Activated CD8-positive, alpha-beta T cell treated with anti-CD3 and anti-CD28 coated beads for 36 hours (primary cell): ENCODE measurements at regions of chr7 and their contacts with region 1.

Region 1: DNA sequence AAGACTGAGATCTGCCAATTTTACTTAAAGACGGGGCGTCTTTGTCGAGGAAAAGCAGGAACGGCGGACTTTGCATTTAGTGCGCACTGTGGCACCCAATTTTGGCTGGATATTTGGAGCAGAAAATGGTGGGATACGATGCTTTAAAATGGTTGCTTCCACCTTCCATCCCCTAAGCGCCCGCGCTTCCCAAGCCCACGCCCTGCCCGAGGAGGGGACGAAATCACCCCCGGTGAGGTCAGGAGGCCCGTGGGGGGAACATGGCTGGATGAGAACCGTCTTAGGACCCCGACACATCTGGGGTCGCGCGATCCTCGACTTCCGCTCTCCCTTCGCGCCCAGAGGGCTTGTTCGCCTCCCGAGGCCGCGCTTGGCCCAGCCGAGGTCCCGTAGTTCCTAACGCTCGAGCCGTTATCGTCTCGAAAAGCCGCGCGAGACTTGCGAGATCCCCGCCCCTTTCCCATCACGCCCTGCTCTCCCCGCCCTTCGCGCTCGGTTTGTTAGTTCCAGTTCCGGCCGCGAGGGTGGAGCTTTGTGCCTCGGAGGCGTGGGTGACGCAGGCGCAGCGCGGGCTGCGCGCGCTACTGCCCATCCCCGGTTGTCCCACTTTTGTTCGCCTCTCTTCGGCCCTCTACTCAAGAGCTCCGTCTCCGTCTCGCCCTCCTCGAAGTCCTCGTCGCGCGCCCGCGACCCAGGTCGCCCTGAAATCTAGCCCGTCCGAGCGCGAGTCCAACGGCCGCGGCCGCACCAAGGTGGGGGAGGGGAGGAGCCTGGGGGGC is at the start of gene SRRT:
- DNase-seq: peak; percentile 99
- ATAC-seq: peak; percentile 95
- H3K4me3 Mint-ChIP-seq: peak within 1 kb of the TSS; percentile 98
- H3K27ac Mint-ChIP-seq: peak within 1 kb of the TSS; percentile 98
- H3K4me1 Mint-ChIP-seq: peaks cover 38% of the 10 kb centered on the region
- H3K27me3 Mint-ChIP-seq: no peaks in the 10 kb centered on the region
- CTCF ChIP-seq: no peak
- total RNA-seq, gene SRRT: 211 to 239 TPM

Region 2: DNA sequence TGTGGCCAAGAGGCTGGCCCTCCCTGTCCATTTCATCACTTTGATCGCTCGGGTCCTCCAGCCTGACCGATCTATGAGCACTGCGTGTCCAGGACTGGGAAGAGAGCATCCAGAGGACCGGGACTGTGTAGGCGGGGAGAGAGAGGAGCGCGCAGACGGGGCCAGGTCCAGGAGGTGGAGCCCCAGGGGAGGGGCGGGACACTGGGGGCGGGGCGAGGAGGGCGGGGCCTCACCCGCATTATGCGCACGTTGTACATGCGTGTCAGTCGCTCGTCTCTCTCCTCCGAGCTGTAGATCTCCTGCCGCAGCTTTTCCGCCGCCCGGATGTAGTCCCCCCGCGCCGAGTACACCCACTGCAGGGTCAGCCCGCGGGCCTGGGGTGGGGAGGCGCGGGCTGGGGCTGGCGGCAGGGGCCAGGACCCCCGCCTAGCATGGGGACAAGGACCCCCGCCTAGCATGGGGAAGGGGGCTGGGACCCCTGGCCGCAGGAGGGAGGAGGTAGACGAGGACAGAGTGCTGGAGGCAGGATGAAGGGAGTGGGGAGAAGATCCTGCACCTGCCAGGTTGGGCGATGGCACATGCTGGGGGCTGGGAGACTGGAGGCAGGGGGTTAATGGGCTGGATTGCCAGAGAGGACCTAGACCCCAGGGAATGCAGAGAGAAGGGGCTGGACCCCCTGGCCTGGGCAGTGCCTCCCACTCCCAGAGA is 248.1 kb before region 1 on chr7:
- CTCF ChIA-PET with region 1: no interaction called
- POLR2A ChIA-PET with region 1: no interaction called
- intact Hi-C with region 1: no loop called
- DNase-seq: peak; percentile 93
- ATAC-seq: peak; percentile 97
- H3K4me3 Mint-ChIP-seq: peak overlapping the region; percentile 72
- H3K27ac Mint-ChIP-seq: peak overlapping the region; percentile 81
- H3K4me1 Mint-ChIP-seq: peaks cover 23% of the 10 kb centered on the region
- H3K27me3 Mint-ChIP-seq: no peaks in the 10 kb centered on the region
- CTCF ChIP-seq: no peak

Region 3: GRCh38 chr7:100852048-100852872 is 22.5 kb before region 1 on chr7 and contains the start of gene SLC12A9:
- CTCF ChIA-PET with region 1: interaction called, 16 read pairs
- POLR2A ChIA-PET with region 1: interaction called, 12 read pairs
- intact Hi-C with region 1: no loop called
- DNase-seq: peak; percentile 92
- ATAC-seq: peak; percentile 98
- H3K4me3 Mint-ChIP-seq: peak within 1 kb of the TSS; percentile 90
- H3K27ac Mint-ChIP-seq: peak within 1 kb of the TSS; percentile 77
- H3K4me1 Mint-ChIP-seq: peaks cover 15% of the 10 kb centered on the region
- H3K27me3 Mint-ChIP-seq: no peaks in the 10 kb centered on the region
- CTCF ChIP-seq: peak; percentile 95
- total RNA-seq, gene SLC12A9: 10.2 to 11.3 TPM

Region 4: DNA sequence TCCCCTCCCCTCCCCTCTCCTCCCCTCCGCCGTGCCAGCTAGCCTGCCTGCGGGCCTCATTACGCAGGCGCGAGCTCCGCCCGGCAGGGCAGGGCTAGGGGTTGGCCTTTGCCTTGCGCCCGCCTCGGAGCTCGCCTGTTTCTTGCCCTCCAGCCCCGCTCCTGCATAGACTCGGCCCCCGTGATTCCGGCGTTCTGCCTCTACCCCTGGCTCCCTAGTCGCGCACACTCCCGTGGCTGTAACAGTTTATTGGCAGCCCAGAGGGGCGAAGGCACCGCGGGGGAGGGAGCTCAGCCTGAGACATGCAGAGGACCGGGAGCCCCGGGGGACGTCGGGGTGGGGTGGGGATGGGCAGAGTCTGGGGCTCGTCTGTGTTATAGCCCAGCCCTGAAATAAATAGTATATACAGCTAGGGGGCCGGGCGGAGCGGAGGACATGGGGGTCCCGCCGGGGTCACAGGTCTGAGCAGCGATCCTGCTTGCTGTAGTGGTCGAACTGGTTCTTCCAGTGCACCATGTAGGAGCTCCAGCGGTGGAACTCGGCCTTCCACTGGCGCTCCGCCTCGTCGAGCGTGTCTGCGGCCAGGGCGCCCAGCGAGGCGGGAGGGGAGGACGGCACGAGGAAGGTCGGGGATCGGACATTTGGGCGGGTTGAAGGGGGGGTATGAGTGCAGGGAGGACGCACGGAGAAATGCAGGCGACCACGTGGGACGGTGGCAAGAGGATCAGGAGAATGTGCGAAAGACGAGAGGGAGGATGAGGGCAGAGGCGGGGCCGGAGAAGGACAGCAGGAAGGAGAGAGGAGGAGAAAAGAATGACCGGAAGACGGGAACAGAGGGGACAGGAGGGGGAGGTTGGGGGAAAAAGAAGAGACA is 15.2 kb after region 1 on chr7:
- CTCF ChIA-PET with region 1: interaction called, 9 read pairs
- POLR2A ChIA-PET with region 1: interaction called, 167 read pairs
- intact Hi-C with region 1: no loop called
- DNase-seq: peak; percentile 92
- ATAC-seq: peak; percentile 92
- H3K4me3 Mint-ChIP-seq: peak overlapping the region; percentile 73
- H3K27ac Mint-ChIP-seq: peak overlapping the region; percentile 75
- H3K4me1 Mint-ChIP-seq: peaks cover 37% of the 10 kb centered on the region
- H3K27me3 Mint-ChIP-seq: peaks cover 26% of the 10 kb centered on the region
- CTCF ChIP-seq: no peak